Tibial artery (tissue), 4 donors: ENCODE measurements at regions of chr18 and their contacts with region 1.

Region 1: GRCh38 chr18:32552421-32553030 is 81.8 kb upstream of the GAREM1 start:
- DNase-seq: peak in 1 of 2 donors; percentile 34
- H3K4me3 ChIP-seq: no peak overlapping the region
- H3K27ac ChIP-seq: no peak overlapping the region
- H3K4me1 ChIP-seq: no peaks in the 10 kb centered on the region
- H3K27me3 ChIP-seq: no peaks in the 10 kb centered on the region
- CTCF ChIP-seq: peak; percentile 66 to 71

Region 2: GRCh38 chr18:32158108-32158624 is 394.4 kb before region 1 on chr18:
- intact Hi-C with region 1: loop called (anchors 2 kb)
- DNase-seq: peak; percentile 82 to 87
- H3K4me3 ChIP-seq: peak overlapping the region; percentile 28 to 39
- H3K27ac ChIP-seq: no peak overlapping the region
- H3K4me1 ChIP-seq: peaks cover 0 to 6% (median 0%) of the 10 kb centered on the region in 4 donors
- H3K27me3 ChIP-seq: no peaks in the 10 kb centered on the region
- CTCF ChIP-seq: peak; percentile 79 to 91

Region 3: DNA sequence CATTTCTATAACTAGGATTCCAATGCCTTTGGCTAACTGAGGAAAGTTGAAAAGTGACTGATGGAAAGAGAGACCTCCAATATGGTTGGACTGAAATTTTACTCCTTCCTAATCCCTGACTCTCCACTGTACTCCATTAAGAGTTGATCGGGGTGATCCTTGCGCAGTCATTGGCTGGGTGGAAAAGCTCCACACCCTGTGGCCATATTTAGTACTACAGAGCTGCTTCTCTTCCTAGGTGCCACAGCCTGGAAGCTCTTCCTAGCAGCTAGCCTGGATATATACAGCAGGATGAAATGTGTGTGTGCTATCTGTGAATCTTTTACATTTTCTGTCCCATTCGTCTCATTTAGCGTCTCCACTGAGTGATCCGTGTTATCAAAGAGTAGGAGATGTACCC is 291.5 kb before region 1 on chr18:
- intact Hi-C with region 1: loop called (anchors 10 kb)
- DNase-seq: no peak
- H3K4me3 ChIP-seq: no peak overlapping the region
- H3K27ac ChIP-seq: no peak overlapping the region
- H3K4me1 ChIP-seq: no peaks in the 10 kb centered on the region
- H3K27me3 ChIP-seq: no peaks in the 10 kb centered on the region
- CTCF ChIP-seq: no peak

Region 4: DNA sequence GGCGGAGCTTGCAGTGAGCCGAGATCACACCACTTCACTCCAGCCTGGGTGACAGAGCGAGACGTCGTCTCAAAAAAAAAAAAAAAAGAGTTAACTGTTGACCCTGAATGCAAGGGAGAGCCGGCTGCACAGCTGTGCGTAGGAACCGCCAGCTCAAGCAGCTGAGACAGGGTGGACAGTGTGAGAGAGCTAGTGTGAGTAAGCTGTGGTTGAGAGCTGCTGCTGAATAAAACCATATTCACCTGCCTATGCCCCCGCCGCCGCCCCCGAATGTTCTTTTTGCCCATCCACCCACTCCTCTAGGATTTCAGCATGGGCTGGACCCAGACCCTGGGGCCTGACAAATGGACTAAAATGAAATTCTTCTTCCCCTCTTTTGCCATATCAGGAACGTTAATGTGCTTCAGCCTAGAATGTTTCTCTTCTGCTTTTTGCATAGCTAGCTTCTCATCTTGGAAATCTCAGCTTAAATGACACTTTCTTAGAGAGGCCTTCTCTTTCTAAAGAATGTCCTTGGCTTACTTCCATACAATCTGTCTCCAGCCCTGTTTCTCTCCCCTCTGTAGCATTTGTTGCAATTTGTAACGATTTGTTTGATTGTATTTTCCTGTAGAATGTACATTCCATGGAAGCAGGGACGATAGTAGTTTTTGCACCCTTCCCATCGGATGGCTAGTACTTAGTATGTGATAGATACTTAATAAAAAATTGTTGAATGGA is 77.6 kb after region 1 on chr18:
- intact Hi-C with region 1: no loop called
- DNase-seq: no peak
- H3K4me3 ChIP-seq: no peak overlapping the region
- H3K27ac ChIP-seq: no peak overlapping the region
- H3K4me1 ChIP-seq: no peaks in the 10 kb centered on the region
- H3K27me3 ChIP-seq: no peaks in the 10 kb centered on the region
- CTCF ChIP-seq: no peak

Region 5: GRCh38 chr18:33960417-33960816 is 1407.9 kb after region 1 on chr18:
- intact Hi-C with region 1: no loop called
- DNase-seq: no peak
- H3K4me3 ChIP-seq: no peak overlapping the region
- H3K27ac ChIP-seq: no peak overlapping the region
- H3K4me1 ChIP-seq: no peaks in the 10 kb centered on the region
- H3K27me3 ChIP-seq: no peaks in the 10 kb centered on the region
- CTCF ChIP-seq: no peak